ENCODE measurements at regions of chr5 and their contacts with region 1.

Region 1: GRCh38 chr5:16791036-16791705 is 144.9 kb downstream of the MYO10 start:
- DNase-seq: peak; percentile 55 to 64
- ATAC-seq: peak; percentile 54 to 58; a peak in 3 of 6 replicates
- H3K4me3 ChIP-seq: no peak overlapping the region
- H3K27ac ChIP-seq: peak overlapping the region; percentile 18 to 49; a peak in 4 of 6 replicates
- H3K4me1 ChIP-seq: peaks cover 34% of the 10 kb centered on the region
- CTCF ChIP-seq: peak; percentile 89
- EP300 ChIP-seq: no peak
- POLR2A ChIP-seq: no peak
- RAD21 ChIP-seq: peak; percentile 87 to 89

Region 2: DNA sequence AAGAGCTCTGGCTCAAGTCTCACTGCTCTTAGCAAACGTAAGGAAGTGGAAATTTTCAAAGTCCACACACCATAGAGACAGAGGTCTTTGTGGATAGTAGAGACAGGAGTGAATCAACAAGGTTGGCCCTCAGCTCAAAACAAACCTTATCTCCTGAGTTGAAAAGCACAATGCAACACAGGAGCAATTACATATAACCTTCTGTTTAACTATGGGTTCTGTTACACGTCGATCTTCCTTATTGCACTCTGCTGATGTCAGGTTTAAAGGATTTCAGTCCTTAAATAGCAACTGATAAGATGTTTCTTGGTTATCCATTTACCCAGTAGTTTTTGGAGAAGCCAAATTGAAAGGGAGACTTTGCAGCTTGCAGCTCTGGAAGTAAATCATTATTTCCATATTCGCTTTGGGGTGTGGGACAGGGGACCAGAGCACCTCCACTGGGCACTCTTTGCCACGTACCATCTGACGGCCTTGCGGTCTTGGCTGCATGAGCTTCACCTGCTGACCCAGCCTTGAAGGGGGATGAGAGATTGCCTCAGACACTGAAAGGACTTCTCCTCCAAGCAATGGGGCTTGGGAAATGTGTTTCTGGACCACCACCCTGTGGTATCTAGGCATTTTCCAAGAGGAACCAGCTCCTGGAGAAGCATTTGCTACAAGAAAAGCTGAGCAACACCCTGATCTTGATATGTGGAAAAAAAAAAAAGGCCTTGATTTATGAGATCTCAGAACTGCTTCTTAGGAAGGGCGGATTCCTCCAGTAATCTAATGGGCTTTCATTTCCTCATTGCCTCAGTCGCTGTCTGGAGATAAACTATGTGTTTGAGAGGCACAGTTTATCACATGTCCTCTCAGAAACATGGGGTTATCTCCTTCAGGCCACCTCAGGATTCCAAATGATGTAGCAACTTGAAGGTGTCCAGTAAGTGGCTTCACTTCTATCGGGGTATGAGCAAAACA is 269.4 kb before region 1 on chr5:
- CTCF ChIA-PET with region 1: no interaction called
- POLR2A ChIA-PET with region 1: no interaction called
- DNase-seq: peak in 1 of 2 experiments; percentile 39
- ATAC-seq: peak in 1 of 2 experiments; percentile 64; a peak in 3 of 6 replicates
- H3K4me3 ChIP-seq: no peak overlapping the region
- H3K27ac ChIP-seq: peak overlapping the region in 1 of 2 experiments; percentile 41; a peak in 1 of 6 replicates
- H3K4me1 ChIP-seq: peaks cover 13% of the 10 kb centered on the region; the same call in 2 of the 3 replicates
- CTCF ChIP-seq: no peak
- EP300 ChIP-seq: no peak
- POLR2A ChIP-seq: no peak
- RAD21 ChIP-seq: no peak

Region 3: GRCh38 chr5:16585041-16585667 is 206.0 kb before region 1 on chr5:
- CTCF ChIA-PET with region 1: no interaction called
- POLR2A ChIA-PET with region 1: no interaction called
- DNase-seq: peak in 1 of 2 experiments; percentile 18
- ATAC-seq: peak; percentile 74 to 82
- H3K4me3 ChIP-seq: no peak overlapping the region
- H3K27ac ChIP-seq: no peak overlapping the region
- H3K4me1 ChIP-seq: no peaks in the 10 kb centered on the region
- CTCF ChIP-seq: peak; percentile 47
- EP300 ChIP-seq: no peak
- POLR2A ChIP-seq: no peak
- RAD21 ChIP-seq: no peak

Region 4: DNA sequence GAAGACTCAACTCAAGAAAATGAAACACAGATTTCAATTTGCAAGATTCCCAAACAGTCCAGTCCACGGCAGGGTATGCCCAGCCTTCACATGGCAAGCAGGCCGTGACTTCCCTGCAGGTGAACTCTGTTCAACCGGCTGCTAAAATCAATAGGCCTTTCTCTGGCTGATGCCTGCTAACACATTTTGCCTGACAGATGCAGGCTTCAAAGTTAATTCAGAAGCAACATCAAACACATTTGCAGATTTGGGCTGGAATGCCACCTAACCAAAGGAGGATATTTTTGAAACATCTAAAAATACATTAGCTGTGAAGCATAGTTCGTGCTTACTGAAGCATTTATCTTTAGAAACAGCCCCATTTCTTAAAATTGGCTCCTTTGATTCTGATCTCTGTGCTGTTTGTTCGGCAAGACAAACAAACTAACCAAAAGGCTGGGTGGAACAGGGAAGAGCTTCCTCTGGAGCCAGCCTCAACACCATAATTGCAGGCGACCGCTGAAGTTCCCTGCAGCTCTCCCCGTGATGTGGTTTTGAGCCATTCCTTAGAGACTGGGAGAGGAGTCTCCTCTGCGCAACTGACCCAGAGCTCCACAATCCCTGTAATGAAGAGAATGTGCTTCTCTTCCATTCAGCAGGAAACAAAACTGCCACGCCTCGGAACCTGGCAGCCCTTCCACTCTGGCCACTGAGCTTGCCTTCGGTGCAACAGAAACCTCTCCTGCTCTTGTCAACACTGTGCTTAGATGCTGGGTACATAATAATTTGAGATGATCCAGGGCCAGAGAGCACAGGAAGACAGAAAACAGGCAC is 18.4 kb after region 1 on chr5:
- CTCF ChIA-PET with region 1: interaction called, 11 read pairs
- POLR2A ChIA-PET with region 1: no interaction called
- DNase-seq: no peak
- ATAC-seq: peak in 1 of 2 experiments; percentile 22; a peak in 3 of 6 replicates
- H3K4me3 ChIP-seq: no peak overlapping the region
- H3K27ac ChIP-seq: peak overlapping the region in 1 of 2 experiments; percentile 38; a peak in 2 of 6 replicates
- H3K4me1 ChIP-seq: peaks cover 52% of the 10 kb centered on the region
- CTCF ChIP-seq: no peak
- EP300 ChIP-seq: no peak
- POLR2A ChIP-seq: no peak
- RAD21 ChIP-seq: no peak